ENCODE measurements at regions of chr13 and their contacts with region 1.

Region 1: GRCh38 chr13:91313103-91313502 is 34.4 kb upstream of the MIR17HG start:
- DNase-seq: no peak
- ATAC-seq: peak; percentile 39 to 60
- H3K4me3 ChIP-seq: no peak overlapping the region
- H3K27ac ChIP-seq: no peak overlapping the region
- H3K4me1 ChIP-seq: peaks cover 0 to 3% of the 10 kb centered on the region in 2 donors
- H3K27me3 ChIP-seq: peaks cover 4 to 17% (median 8%) of the 10 kb centered on the region in 3 donors
- CTCF ChIP-seq: peak; percentile 28 to 59 (median 40)
- POLR2A ChIP-seq: no peak

Region 2: DNA sequence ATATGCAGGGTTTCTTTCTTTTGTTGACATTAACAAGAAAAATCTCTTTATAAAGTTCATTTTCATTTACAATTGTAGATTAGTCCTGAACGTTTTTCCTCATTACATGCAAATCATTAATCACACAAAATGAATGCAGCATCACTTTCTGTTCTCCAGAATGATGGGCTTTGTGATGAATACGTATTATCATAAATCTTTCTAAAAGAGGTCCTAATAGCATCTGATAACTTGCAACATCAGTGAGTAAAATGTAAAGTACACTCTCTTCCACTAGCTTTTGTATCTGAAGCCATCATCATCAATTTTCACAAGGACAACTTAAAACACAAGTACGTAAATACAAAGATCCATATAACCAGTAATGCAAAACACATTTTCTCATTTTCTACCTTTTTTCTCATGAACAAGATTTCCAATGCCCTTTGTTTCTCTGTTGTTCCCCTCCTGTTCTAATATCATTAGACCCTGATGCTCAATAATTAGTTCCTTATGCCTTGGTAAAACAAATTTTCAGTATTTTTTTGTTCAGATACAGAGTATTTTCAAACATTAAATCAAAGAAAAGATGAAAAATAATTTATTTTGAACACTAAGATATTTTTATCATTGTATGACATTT is 403.0 kb before region 1 on chr13:
- in situ Hi-C with region 1: no loop called
- intact Hi-C with region 1: no loop called
- DNase-seq: no peak
- ATAC-seq: no peak
- H3K4me3 ChIP-seq: no peak overlapping the region
- H3K27ac ChIP-seq: no peak overlapping the region
- H3K4me1 ChIP-seq: no peaks in the 10 kb centered on the region
- H3K27me3 ChIP-seq: no peaks in the 10 kb centered on the region
- CTCF ChIP-seq: no peak
- POLR2A ChIP-seq: no peak

Region 3: GRCh38 chr13:91348906-91349435 is 35.9 kb after region 1 on chr13:
- in situ Hi-C with region 1: no loop called
- intact Hi-C with region 1: loop called (anchors 5 kb)
- DNase-seq: peak; percentile 78 to 88
- ATAC-seq: peak; percentile 75
- H3K4me3 ChIP-seq: peak overlapping the region; percentile 40 to 78 (median 72)
- H3K27ac ChIP-seq: peak overlapping the region; percentile 86 to 94 (median 88)
- H3K4me1 ChIP-seq: peaks cover 10 to 20% of the 10 kb centered on the region in 2 donors
- H3K27me3 ChIP-seq: no peaks in the 10 kb centered on the region
- CTCF ChIP-seq: peak; percentile 88 to 99 (median 99)
- POLR2A ChIP-seq: peak; percentile 63 to 70

Region 4: GRCh38 chr13:91722267-91722884 is 409.3 kb after region 1 on chr13:
- in situ Hi-C with region 1: no loop called
- intact Hi-C with region 1: loop called (anchors 5 kb)
- DNase-seq: no peak
- ATAC-seq: no peak
- H3K4me3 ChIP-seq: no peak overlapping the region
- H3K27ac ChIP-seq: no peak overlapping the region
- H3K4me1 ChIP-seq: no peaks in the 10 kb centered on the region
- H3K27me3 ChIP-seq: no peaks in the 10 kb centered on the region
- CTCF ChIP-seq: peak in 1 of 5 experiments; percentile 30
- POLR2A ChIP-seq: no peak